AG04449 (cell line): ENCODE measurements at regions of chr6 and their contacts with region 1.

Region 1: GRCh38 chr6:39361657-39362486 is 39.4 kb upstream of the KCNK16 start:
- DNase-seq: no peak
- H3K4me3 ChIP-seq: peak overlapping the region; percentile 13; the same call in 1 of the 2 replicates
- CTCF ChIP-seq: peak; percentile 85

Region 2: GRCh38 chr6:39347906-39348585 is 13.8 kb before region 1 on chr6:
- CTCF ChIA-PET with region 1: interaction called, 40 read pairs
- POLR2A ChIA-PET with region 1: no interaction called
- DNase-seq: no peak
- H3K4me3 ChIP-seq: no peak overlapping the region
- CTCF ChIP-seq: peak; percentile 84

Region 3: DNA sequence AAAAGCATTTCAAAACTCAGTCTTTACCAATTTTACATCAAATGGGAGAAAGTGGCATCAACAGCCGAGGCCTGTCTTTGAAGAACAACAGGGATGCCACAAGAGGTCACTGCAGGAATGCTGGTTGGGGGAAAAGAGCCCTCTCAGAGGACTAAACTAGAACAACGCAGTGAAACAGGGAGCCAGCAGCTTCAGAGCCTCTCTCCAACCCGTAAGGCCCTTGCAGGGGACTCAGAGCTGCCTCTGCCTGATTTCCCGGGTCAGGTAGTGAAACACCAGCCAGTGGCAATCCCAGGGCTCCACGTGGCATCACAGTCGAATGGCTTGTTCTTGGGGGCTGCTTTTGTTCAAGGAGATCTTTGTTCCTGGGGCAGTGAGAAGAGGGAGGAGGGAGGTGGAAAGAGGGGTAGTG is 15.7 kb after region 1 on chr6:
- CTCF ChIA-PET with region 1: interaction called, 28 read pairs
- POLR2A ChIA-PET with region 1: no interaction called
- DNase-seq: peak; percentile 36
- H3K4me3 ChIP-seq: no peak overlapping the region
- CTCF ChIP-seq: peak; percentile 68

Region 4: GRCh38 chr6:39887381-39888070 is 525.7 kb after region 1 on chr6:
- CTCF ChIA-PET with region 1: interaction called, 28 read pairs
- POLR2A ChIA-PET with region 1: interaction called, 7 read pairs
- DNase-seq: peak; percentile 59
- H3K4me3 ChIP-seq: no peak overlapping the region
- CTCF ChIP-seq: no peak

Region 5: DNA sequence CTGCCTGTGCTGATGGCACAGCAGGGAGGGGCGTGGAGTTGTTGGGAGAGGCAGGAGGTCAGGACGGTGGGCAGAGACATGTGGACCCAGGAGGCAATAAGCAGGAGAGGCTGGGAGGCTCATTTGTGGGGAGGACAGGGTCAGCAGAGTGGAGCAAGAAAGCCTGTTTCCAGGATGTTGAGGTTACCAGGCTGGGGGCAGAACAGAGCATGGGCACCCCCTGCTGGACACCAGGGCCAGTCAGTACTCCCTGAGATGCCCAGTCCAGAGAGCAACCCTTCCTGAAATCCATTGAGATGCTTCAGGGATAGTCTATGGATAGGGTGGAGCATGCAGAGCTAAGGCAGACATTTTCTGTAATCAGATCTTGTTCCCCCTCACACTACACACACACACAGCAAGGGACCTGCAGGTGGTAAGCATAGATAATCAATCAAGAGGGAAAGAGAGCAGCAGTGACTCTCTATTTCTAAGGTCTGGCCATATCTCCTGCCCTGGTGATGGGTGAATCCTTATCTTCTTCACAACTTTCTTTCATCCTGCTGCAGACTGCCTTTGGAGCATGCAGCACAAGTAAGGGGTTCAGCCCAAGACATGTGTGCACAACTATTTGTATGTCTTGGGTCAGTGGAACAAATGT is 530.7 kb after region 1 on chr6:
- CTCF ChIA-PET with region 1: interaction called, 28 read pairs
- POLR2A ChIA-PET with region 1: interaction called, 4 read pairs
- DNase-seq: peak; percentile 10
- H3K4me3 ChIP-seq: no peak overlapping the region
- CTCF ChIP-seq: peak; percentile 89

Region 6: GRCh38 chr6:40308533-40309306 is 946.8 kb after region 1 on chr6:
- CTCF ChIA-PET with region 1: interaction called, 15 read pairs
- POLR2A ChIA-PET with region 1: no interaction called
- DNase-seq: no peak
- H3K4me3 ChIP-seq: no peak overlapping the region
- CTCF ChIP-seq: peak; percentile 80